Endothelial cell of umbilical vein (primary cell): ENCODE measurements at regions of chr2 and their contacts with region 1.

Region 1: GRCh38 chr2:181466661-181467576 is 9.7 kb downstream of the ITGA4 start:
- DNase-seq: peak; percentile 41
- H3K4me3 ChIP-seq: no peak overlapping the region
- H3K27ac ChIP-seq: no peak overlapping the region
- H3K4me1 ChIP-seq: no peaks in the 10 kb centered on the region
- H3K27me3 ChIP-seq: peaks cover 4 to 10% of the 10 kb centered on the region in 2 experiments
- CTCF ChIP-seq: peak; percentile 69 to 70
- POLR2A ChIP-seq: no peak

Region 2: DNA sequence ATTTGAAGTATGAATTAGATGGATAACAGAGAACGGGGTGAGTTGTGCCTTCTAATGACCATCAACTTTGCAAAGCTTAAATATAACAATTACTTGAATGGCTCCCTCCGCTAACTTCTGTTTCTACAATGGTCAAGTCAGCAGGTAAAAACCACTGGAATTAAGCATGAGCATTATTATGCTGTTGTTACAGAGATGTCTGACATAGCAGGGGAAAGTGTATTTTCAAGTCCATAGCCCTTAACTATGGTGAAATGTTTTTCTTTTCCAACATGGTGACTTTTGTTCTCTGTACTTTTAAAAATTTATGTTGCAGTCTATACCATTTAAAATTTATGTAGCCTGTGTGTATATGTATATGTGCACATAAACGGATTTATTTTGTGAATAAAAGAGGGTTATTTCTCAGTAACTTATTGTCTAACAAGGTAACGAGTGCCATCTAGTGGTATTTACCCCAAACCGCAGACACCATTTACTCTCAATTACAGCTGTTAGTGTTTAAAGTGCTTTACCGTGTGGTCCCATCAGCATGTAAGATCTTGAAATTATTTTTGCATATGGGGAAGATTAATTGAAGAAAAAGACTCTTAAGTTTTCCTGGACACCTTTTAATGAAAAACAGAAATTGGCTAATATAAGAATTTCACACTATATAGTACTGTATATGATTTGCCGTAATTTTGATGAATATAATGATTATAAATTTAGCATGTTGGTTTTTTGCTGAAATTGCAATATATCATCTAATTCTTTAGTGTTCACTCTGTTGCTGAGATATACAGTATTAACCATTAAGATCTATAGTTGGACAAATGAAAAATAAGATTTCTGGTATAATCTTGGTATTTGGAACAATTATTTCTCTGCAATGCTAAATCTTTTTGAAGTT is 408.3 kb before region 1 on chr2:
- CTCF ChIA-PET with region 1: interaction called, 11 read pairs
- POLR2A ChIA-PET with region 1: no interaction called
- dilution Hi-C with region 1: no loop called
- intact Hi-C with region 1: no loop called
- DNase-seq: peak; percentile 53
- H3K4me3 ChIP-seq: no peak overlapping the region
- H3K27ac ChIP-seq: no peak overlapping the region
- H3K4me1 ChIP-seq: no peaks in the 10 kb centered on the region
- H3K27me3 ChIP-seq: no peaks in the 10 kb centered on the region
- CTCF ChIP-seq: peak; percentile 35 to 43
- POLR2A ChIP-seq: no peak

Region 3: DNA sequence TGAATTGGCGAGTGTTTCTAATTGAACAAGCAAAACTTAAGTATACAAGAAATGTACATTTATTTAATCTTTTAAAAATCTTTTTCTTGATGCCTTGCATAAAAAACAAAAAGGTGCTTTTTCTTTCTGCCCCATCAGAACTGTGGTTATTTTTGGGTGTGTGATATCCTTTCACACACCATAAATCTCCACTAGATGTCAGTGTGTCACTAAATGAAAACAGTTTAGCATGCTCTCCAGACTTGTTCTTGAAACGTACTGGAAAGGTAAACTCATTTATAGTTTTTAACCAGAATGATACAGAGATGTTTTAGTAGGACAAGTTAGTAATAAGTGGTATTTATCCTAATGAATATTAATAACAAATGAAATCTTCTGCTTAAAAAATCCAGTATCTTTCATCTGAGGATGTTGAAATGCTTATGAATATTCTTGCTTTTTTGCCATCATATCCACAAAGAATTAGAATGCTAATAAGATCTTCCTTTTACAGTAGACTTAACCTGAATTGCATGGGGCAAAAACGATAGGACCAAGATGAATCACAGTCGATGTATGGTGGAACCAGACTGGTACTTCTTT is 389.7 kb before region 1 on chr2:
- CTCF ChIA-PET with region 1: interaction called, 16 read pairs
- POLR2A ChIA-PET with region 1: no interaction called
- dilution Hi-C with region 1: no loop called
- intact Hi-C with region 1: loop called (anchors 1 kb)
- DNase-seq: peak; percentile 56
- H3K4me3 ChIP-seq: no peak overlapping the region
- H3K27ac ChIP-seq: no peak overlapping the region
- H3K4me1 ChIP-seq: peaks cover 21% of the 10 kb centered on the region
- H3K27me3 ChIP-seq: no peaks in the 10 kb centered on the region
- CTCF ChIP-seq: peak; percentile 38 to 47
- POLR2A ChIP-seq: no peak

Region 4: DNA sequence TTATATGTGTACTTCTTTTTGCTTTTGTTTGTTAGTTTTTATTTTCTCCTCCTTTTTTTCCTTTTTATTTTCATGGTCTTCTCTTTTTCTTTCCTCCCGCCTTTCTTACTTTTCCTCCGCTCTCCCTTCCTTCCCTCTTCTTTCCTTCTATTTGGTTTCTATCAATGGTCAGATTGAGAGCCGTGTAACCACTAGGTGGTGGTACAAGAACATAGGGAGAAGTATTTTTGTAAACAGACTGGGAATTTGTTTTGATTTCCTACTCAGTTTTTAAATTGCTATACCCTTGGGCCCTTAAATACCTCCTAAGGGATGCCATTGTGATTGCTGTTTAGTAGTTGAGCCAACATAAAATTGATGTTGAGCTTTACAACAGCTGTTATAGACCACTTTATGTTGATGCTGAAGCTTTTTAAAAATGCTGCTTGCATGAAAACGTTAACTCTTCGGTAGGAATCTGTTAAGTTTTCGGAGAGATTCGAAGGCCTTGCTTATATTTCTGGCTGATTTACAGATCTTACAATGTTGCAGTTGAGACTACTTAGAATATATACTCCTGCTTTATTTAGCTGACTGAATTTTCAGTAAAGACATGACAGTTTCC is 362.3 kb before region 1 on chr2:
- CTCF ChIA-PET with region 1: interaction called, 95 read pairs
- POLR2A ChIA-PET with region 1: no interaction called
- dilution Hi-C with region 1: no loop called
- intact Hi-C with region 1: loop called (anchors 1 kb)
- DNase-seq: peak; percentile 57
- H3K4me3 ChIP-seq: no peak overlapping the region
- H3K27ac ChIP-seq: no peak overlapping the region
- H3K4me1 ChIP-seq: peaks cover 12% of the 10 kb centered on the region
- H3K27me3 ChIP-seq: no peaks in the 10 kb centered on the region
- CTCF ChIP-seq: peak; percentile 35 to 41
- POLR2A ChIP-seq: no peak

Region 5: GRCh38 chr2:181334158-181334826 is 132.6 kb before region 1 on chr2:
- CTCF ChIA-PET with region 1: no interaction called
- POLR2A ChIA-PET with region 1: no interaction called
- dilution Hi-C with region 1: no loop called
- intact Hi-C with region 1: no loop called
- DNase-seq: no peak
- H3K4me3 ChIP-seq: no peak overlapping the region
- H3K27ac ChIP-seq: no peak overlapping the region
- H3K4me1 ChIP-seq: no peaks in the 10 kb centered on the region
- H3K27me3 ChIP-seq: no peaks in the 10 kb centered on the region
- CTCF ChIP-seq: no peak
- POLR2A ChIP-seq: no peak

Region 6: GRCh38 chr2:182477774-182478173 is 1010.9 kb after region 1 on chr2:
- CTCF ChIA-PET with region 1: no interaction called
- POLR2A ChIA-PET with region 1: no interaction called
- dilution Hi-C with region 1: no loop called
- intact Hi-C with region 1: no loop called
- DNase-seq: no peak
- H3K4me3 ChIP-seq: no peak overlapping the region
- H3K27ac ChIP-seq: no peak overlapping the region
- H3K4me1 ChIP-seq: no peaks in the 10 kb centered on the region
- H3K27me3 ChIP-seq: no peaks in the 10 kb centered on the region
- CTCF ChIP-seq: no peak
- POLR2A ChIP-seq: no peak